Activated CD4-positive, alpha-beta T cell treated with anti-CD3 and anti-CD28 coated beads, Interleukin-2, amount 10 ng/mL, durations not matched to agents 7 days and 5 days (primary cell): ENCODE measurements at regions of chr13 and their contacts with region 1.

Region 1: GRCh38 chr13:48769107-48769704 is 115.5 kb downstream of the CYSLTR2 start:
- DNase-seq: peak; percentile 92
- H3K4me3 Mint-ChIP-seq: no peak overlapping the region
- H3K27ac Mint-ChIP-seq: no peak overlapping the region
- H3K4me1 Mint-ChIP-seq: peaks cover 8% of the 10 kb centered on the region
- H3K27me3 Mint-ChIP-seq: peaks cover 41% of the 10 kb centered on the region

Region 2: DNA sequence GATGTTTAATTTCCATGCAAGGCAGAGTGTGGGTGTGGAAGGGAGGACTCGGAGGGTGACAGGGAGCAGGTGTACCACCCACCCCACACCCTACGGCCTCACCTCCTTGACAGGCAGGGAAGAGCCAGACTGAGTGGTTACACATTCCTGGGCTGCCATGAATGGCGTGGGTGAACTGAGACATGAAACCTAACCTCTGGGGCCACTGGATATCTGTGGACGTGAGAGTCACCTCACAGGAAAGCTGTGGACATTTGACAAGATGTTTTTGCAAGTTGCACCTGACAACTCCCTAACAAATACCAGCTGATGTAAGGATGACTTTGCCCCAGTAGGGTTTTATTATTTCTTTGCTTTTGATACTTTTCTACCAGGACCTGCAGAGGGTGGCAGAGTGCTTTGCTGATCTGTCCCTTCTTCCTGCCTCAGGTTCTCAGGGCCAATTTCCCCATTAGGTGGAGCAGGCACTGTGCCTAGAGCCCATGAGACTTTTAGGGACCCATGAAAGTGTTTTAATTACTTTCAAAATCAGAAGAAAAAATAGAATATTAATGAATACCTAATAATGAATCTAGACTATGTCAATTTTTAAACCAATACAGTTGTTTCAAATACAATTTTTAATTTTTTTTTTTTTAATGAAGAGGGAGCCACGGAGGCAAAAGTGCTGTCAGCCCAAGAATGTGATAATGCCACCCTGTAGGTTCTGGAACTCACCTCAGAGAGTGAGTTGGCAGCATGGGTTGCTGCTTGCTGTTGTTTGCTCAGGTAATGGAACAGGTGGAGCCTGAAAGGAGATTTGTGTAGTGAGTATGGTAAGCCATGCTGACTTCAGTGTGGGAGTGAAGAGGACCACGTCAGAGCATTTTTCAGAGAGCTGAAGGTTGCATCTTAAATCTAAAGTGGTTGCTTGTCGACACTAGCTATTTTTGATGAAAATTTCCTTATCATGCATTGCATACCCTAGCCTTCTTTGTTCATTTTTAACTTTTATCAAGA is 173.5 kb before region 1 on chr13:
- CTCF ChIA-PET with region 1: interaction called, 25 read pairs
- POLR2A ChIA-PET with region 1: no interaction called
- DNase-seq: peak; percentile 72
- H3K4me3 Mint-ChIP-seq: no peak overlapping the region
- H3K27ac Mint-ChIP-seq: no peak overlapping the region
- H3K4me1 Mint-ChIP-seq: peaks cover 2% of the 10 kb centered on the region
- H3K27me3 Mint-ChIP-seq: no peaks in the 10 kb centered on the region

Region 3: GRCh38 chr13:48749699-48750473 is 19.3 kb before region 1 on chr13:
- CTCF ChIA-PET with region 1: interaction called, 11 read pairs
- POLR2A ChIA-PET with region 1: no interaction called
- DNase-seq: peak; percentile 37
- H3K4me3 Mint-ChIP-seq: no peak overlapping the region
- H3K27ac Mint-ChIP-seq: no peak overlapping the region
- H3K4me1 Mint-ChIP-seq: peaks cover 11% of the 10 kb centered on the region
- H3K27me3 Mint-ChIP-seq: no peaks in the 10 kb centered on the region